Endothelial cell of umbilical vein (primary cell): ENCODE measurements at regions of chr19 and their contacts with region 1.

Region 1: DNA sequence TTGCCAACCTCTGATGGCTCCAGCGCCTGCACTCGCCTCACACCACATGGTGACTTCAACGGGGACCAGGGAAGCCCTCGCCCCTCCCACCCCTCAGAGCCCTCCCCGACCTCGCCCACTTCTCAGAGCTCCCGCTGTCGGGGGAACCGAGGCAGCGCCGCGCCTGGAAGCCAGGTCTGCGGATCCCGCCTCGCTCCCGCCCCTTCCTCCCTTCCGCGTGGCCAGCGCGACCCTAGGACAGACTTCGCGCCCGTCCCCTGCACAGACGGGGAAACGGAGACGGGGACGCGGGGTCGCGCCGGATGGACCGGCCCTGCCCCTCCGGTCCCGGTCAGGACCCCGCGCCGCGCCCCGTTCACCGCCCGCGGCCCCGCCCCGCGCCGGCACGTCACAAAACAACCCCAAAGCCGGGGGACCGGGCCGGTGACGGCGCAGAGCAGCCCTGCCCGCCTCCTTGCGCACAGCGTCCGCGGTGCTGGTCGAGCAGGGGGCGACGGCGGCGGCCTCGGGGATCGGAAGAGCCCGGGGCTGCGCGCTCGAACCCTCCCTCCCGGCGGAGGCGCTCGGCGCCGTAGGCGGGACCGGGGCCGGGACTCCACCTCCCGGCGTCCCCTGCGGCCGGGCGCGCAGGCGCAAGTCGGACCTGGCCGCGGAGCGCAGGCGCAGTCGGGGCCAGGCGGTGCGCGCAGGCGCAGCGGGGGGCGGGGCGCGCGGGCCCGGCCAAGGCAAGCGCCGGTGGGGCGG is 379 bp upstream of the CDC34 start:
- DNase-seq: peak; percentile 73
- H3K4me3 ChIP-seq: peak overlapping the region; percentile 57 to 88 (median 76)
- H3K27ac ChIP-seq: peak overlapping the region; percentile 70
- H3K4me1 ChIP-seq: peaks cover 17% of the 10 kb centered on the region
- H3K27me3 ChIP-seq: no peaks in the 10 kb centered on the region
- CTCF ChIP-seq: peak in 1 of 2 donors; percentile 8
- POLR2A ChIP-seq: peak; percentile 20

Region 2: DNA sequence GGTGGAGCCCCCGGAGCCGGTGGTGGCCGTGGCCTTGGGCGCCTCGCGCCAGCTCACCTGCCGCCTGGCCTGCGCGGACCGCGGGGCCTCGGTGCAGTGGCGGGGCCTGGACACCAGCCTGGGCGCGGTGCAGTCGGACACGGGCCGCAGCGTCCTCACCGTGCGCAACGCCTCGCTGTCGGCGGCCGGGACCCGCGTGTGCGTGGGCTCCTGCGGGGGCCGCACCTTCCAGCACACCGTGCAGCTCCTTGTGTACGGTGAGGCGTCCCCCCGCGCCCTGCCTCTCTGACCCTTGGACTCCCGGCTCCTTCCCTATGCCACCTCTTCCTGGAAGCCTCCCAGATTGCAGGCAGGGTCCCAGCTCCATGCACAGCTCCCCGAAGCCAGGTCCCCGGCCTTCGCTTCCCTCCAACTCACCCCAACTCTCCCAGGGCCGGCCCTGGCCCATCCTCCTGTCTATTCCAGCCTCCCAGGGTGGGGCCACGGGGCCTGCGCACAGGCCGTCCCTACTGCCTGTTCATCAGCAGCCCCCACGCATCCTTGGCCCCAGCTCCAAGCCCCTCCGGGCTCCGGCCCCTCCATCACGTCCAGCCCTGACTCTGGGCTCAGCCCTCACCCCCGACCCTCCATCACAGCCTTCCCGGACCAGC is 33.2 kb before region 1 on chr19:
- CTCF ChIA-PET with region 1: no interaction called
- POLR2A ChIA-PET with region 1: no interaction called
- dilution Hi-C with region 1: no loop called
- intact Hi-C with region 1: no loop called
- DNase-seq: no peak
- H3K4me3 ChIP-seq: no peak overlapping the region
- H3K27ac ChIP-seq: no peak overlapping the region
- H3K4me1 ChIP-seq: no peaks in the 10 kb centered on the region
- H3K27me3 ChIP-seq: peaks cover 9 to 12% of the 10 kb centered on the region in 2 experiments
- CTCF ChIP-seq: no peak
- POLR2A ChIP-seq: no peak

Region 3: GRCh38 chr19:572140-572742 is 41.1 kb after region 1 on chr19 and contains the start of gene BSG:
- CTCF ChIA-PET with region 1: interaction called, 6 read pairs
- POLR2A ChIA-PET with region 1: no interaction called
- dilution Hi-C with region 1: no loop called
- intact Hi-C with region 1: loop called (anchors 1 kb)
- DNase-seq: peak; percentile 97
- H3K4me3 ChIP-seq: peak within 1 kb of the TSS; percentile 68 to 92 (median 88)
- H3K27ac ChIP-seq: peak within 1 kb of the TSS; percentile 72
- H3K4me1 ChIP-seq: peaks cover 28% of the 10 kb centered on the region
- H3K27me3 ChIP-seq: no peaks in the 10 kb centered on the region
- CTCF ChIP-seq: no peak
- POLR2A ChIP-seq: peak; percentile 99
- total RNA-seq, gene BSG: 466 and 485 TPM in 2 replicates

Region 4: DNA sequence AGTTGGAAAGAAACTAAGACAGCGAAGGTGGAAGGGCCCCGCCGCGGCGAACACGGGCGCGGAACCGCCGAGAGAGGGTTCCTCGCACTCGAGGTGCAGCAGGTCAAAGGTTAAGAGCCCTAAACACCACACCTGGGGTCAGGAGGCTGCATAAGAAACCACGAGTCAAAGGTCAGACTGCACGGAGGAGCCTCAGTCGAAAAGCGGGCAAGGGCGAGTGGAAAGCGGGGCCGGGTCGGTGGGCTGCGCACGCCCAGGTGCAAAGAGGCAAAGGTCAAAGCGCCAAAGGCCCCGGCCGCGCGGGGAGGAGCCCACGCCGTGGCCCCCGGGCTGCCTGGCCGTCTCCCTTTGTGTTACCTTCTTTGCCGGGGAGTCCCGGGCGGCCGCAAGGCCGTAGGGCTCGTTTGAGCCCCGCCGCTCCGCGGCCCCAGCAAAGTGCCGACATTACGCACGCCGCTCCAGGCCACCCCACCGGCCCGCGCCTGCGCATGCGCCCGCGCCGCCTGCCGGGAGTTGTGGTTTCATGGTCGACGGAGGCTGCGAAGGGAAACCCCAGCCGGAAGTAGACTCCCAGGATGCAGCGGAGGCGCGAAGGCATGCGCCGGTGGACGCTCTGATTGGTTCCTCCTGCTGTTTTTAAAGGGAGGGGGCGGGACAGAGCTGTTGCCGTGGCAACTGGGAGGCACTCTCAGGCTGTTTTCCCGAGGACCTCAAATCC is 102.0 kb after region 1 on chr19 and contains the start of gene POLRMT:
- CTCF ChIA-PET with region 1: no interaction called
- POLR2A ChIA-PET with region 1: interaction called, 3 read pairs
- dilution Hi-C with region 1: no loop called
- intact Hi-C with region 1: loop called (anchors 1 kb)
- DNase-seq: peak; percentile 98
- H3K4me3 ChIP-seq: peak within 1 kb of the TSS; percentile 70 to 88 (median 85)
- H3K27ac ChIP-seq: peak within 1 kb of the TSS; percentile 48
- H3K4me1 ChIP-seq: peaks cover 16% of the 10 kb centered on the region
- H3K27me3 ChIP-seq: no peaks in the 10 kb centered on the region
- CTCF ChIP-seq: peak in 1 of 2 donors; percentile 13
- POLR2A ChIP-seq: peak; percentile 58
- total RNA-seq, gene POLRMT: 46.7 and 50.6 TPM in 2 replicates